WTC11 (cell line): ENCODE measurements at regions of chr7 and their contacts with region 1.

Region 1: GRCh38 chr7:129454249-129454551 is 20.0 kb downstream of the STRIP2 start:
- DNase-seq: no peak
- ATAC-seq: no peak
- H3K4me3 Mint-ChIP-seq: no peak overlapping the region
- H3K27ac Mint-ChIP-seq: no peak overlapping the region
- H3K4me1 Mint-ChIP-seq: no peaks in the 10 kb centered on the region
- H3K27me3 Mint-ChIP-seq: no peaks in the 10 kb centered on the region
- CTCF ChIP-seq: no peak

Region 2: GRCh38 chr7:129054438-129055293 is 399.5 kb before region 1 on chr7 and contains the start of gene TNPO3:
- CTCF ChIA-PET with region 1: no interaction called
- POLR2A ChIA-PET with region 1: no interaction called
- DNase-seq: peak; percentile 93
- ATAC-seq: peak; percentile 87
- H3K4me3 Mint-ChIP-seq: peak within 1 kb of the TSS; percentile 97
- H3K27ac Mint-ChIP-seq: peak within 1 kb of the TSS; percentile 100
- H3K4me1 Mint-ChIP-seq: peaks cover 36% of the 10 kb centered on the region
- H3K27me3 Mint-ChIP-seq: no peaks in the 10 kb centered on the region
- CTCF ChIP-seq: no peak
- total RNA-seq, gene TNPO3: 87.0 to 91.7 TPM (median 89.1 TPM) in 3 replicates

Region 3: GRCh38 chr7:129519464-129519863 is 65.3 kb after region 1 on chr7:
- CTCF ChIA-PET with region 1: no interaction called
- POLR2A ChIA-PET with region 1: interaction called, 10 read pairs
- DNase-seq: no peak
- ATAC-seq: peak; percentile 54
- H3K4me3 Mint-ChIP-seq: no peak overlapping the region
- H3K27ac Mint-ChIP-seq: peak overlapping the region; percentile 54
- H3K4me1 Mint-ChIP-seq: peaks cover 33% of the 10 kb centered on the region
- H3K27me3 Mint-ChIP-seq: peaks cover 2% of the 10 kb centered on the region; the same call in 1 of the 2 replicates
- CTCF ChIP-seq: no peak